HepG2 (cell line): ENCODE measurements at regions of chr6 and their contacts with region 1.

Region 1: DNA sequence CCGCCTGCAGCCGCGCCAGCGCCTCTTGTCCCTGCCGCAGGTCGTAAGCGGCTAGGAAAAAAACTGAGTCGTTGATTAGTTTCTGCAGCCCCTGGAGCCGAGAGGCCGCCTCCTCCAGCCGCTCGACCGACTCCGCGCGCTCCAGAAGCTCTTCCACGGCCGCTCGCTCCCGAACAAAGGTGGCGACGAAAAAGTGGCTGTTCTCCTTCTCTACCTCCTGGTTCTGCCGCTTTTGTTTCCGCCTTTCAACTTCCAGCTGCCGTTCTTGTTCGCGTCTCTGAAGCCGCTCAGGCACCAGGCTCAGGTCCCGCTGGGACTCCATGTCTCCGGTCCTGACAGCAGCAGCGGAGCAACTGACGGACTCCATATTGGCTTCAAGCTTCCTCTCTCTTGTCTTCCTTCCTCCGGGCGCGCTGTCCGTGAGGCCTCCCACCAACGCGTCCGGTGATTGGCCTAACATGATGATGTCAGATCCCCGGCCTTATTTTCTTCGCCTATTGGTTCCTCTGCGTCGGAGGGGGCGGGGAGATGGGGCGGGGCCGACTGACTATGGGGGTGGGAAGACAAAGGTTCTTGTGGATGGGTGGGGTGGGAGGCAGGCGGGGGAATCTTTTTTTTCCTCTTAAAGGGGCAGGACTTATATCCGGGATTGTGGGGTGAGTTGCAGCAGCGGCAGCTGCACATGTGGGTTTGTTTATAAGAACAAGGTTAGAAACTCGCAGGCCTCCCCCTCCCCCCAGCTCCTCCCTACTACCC is at the start of gene TBCC:
- DNase-seq: peak; percentile 99
- ATAC-seq: peak; percentile 87
- H3K4me3 ChIP-seq: peak within 1 kb of the TSS; percentile 93 to 100 (median 99)
- H3K27ac ChIP-seq: peak within 1 kb of the TSS; percentile 93
- H3K4me1 ChIP-seq: peaks cover 44% of the 10 kb centered on the region
- H3K27me3 ChIP-seq: no peaks in the 10 kb centered on the region; a peak in 1 of 5 replicates
- CTCF ChIP-seq: no peak; the same call in 1 of the 2 replicates
- EP300 ChIP-seq: 0 out of 4 replicates have a peak, but pooled peaks of 1 of the 2 experiments have one; percentile 15
- POLR2A ChIP-seq: peak; percentile 97 to 100
- RAD21 ChIP-seq: 0 out of 2 replicates have a peak, but pooled peaks have one; percentile 4
- total RNA-seq, gene TBCC: 36.1 and 43.2 TPM in 2 replicates

Region 2: DNA sequence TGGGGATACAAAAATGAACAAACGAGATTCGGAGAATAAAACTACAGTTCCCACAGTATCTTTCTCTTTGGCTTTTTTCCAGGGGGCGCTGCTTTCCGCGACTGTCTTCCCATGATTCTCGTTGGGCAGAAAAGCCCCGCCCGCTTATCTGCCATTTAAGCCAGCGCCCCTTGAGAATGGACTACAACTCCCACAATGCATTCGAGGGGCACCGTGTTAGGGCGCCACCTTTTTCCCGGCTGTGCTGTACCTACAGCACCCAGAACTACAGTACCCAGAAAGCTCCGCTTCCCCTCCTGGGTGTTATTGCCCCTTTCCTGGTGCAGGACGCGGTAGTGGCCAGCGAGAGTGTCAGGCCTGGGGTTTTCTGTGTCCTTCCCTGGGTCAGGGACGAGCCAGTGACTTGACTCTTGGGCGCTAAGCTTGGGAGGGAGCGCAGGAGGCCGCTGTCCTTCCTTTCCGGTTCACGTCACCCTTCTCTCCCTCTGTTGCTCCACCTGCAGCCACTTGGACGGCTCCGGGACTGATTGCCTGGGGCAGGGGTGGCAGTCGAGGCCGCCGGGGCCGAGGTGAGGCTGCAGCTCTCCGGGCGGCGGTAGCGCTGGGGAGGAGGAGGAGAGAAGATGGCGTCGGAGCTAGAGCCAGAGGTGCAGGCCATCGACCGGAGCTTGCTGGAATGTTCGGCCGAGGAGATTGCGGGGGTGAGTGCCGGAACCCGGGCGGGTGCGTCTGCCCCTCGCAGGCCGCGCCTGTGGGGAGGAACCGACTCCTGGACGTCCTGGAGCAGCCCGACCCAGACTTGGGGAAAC is 182.0 kb before region 1 on chr6 and contains the start of gene UBR2:
- CTCF ChIA-PET with region 1: no interaction called
- POLR2A ChIA-PET with region 1: interaction called, 22 read pairs
- in situ Hi-C with region 1: no loop called
- intact Hi-C with region 1: loop called (anchors 10 kb)
- DNase-seq: peak; percentile 99
- ATAC-seq: peak; percentile 98
- H3K4me3 ChIP-seq: peak within 1 kb of the TSS; percentile 95 to 99 (median 96)
- H3K27ac ChIP-seq: peak within 1 kb of the TSS; percentile 93
- H3K4me1 ChIP-seq: peaks cover 31% of the 10 kb centered on the region
- H3K27me3 ChIP-seq: peaks cover 0 to 5% of the 10 kb centered on the region in 2 experiments; a peak in 1 of 5 replicates
- CTCF ChIP-seq: peak; percentile 82
- EP300 ChIP-seq: peak in 1 of 2 experiments; percentile 62; a peak in 2 of 4 replicates
- POLR2A ChIP-seq: peak; percentile 96 to 98
- RAD21 ChIP-seq: peak; percentile 40; the same call in 1 of the 2 replicates
- total RNA-seq, gene UBR2: 29.3 and 39.3 TPM in 2 replicates

Region 3: GRCh38 chr6:42762426-42762859 is 16.6 kb after region 1 on chr6:
- CTCF ChIA-PET with region 1: no interaction called
- POLR2A ChIA-PET with region 1: interaction called, 14 read pairs
- in situ Hi-C with region 1: no loop called
- intact Hi-C with region 1: no loop called
- DNase-seq: no peak
- ATAC-seq: no peak
- H3K4me3 ChIP-seq: no peak overlapping the region
- H3K27ac ChIP-seq: no peak overlapping the region
- H3K4me1 ChIP-seq: no peaks in the 10 kb centered on the region
- H3K27me3 ChIP-seq: no peaks in the 10 kb centered on the region
- CTCF ChIP-seq: no peak
- EP300 ChIP-seq: no peak
- POLR2A ChIP-seq: no peak
- RAD21 ChIP-seq: no peak

Region 4: DNA sequence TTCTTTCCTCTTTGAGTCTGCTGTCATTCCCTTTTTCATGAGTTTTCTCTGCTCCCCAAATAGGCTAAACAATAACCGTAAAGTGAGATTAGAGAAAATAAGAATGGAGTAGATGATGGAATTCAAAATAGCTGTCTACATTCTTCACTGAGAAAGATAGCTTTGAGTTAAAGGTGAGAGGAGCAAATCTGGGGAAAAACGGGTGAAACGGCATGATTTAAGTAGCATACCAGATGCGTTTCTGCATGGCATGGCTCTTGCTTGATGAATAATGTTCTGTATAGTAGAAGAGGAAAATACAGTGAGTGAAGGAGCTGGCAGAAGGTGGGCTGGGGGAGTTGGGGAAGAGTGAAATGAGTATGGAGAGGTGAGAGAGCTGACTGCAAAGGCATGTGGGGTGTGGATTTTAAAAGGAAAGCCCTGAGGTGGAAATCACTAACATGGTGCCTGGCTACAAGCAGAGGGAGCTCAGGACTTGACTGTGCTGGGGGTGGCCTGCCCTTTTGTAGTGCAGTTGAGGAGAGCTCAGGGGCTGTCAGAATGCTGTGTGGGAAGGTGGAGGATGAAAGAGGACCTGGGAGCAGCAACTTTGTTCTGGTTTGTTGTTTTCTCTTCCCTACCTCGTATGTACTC is 44.8 kb after region 1 on chr6:
- CTCF ChIA-PET with region 1: no interaction called
- POLR2A ChIA-PET with region 1: interaction called, 270 read pairs
- in situ Hi-C with region 1: no loop called
- intact Hi-C with region 1: no loop called
- DNase-seq: no peak
- ATAC-seq: peak; percentile 62
- H3K4me3 ChIP-seq: no peak overlapping the region
- H3K27ac ChIP-seq: no peak overlapping the region
- H3K4me1 ChIP-seq: peaks cover 59% of the 10 kb centered on the region
- H3K27me3 ChIP-seq: no peaks in the 10 kb centered on the region
- CTCF ChIP-seq: no peak
- EP300 ChIP-seq: no peak
- POLR2A ChIP-seq: 0 out of 4 replicates have a peak, but pooled peaks of 1 of the 2 experiments have one; percentile 34
- RAD21 ChIP-seq: no peak

Region 5: DNA sequence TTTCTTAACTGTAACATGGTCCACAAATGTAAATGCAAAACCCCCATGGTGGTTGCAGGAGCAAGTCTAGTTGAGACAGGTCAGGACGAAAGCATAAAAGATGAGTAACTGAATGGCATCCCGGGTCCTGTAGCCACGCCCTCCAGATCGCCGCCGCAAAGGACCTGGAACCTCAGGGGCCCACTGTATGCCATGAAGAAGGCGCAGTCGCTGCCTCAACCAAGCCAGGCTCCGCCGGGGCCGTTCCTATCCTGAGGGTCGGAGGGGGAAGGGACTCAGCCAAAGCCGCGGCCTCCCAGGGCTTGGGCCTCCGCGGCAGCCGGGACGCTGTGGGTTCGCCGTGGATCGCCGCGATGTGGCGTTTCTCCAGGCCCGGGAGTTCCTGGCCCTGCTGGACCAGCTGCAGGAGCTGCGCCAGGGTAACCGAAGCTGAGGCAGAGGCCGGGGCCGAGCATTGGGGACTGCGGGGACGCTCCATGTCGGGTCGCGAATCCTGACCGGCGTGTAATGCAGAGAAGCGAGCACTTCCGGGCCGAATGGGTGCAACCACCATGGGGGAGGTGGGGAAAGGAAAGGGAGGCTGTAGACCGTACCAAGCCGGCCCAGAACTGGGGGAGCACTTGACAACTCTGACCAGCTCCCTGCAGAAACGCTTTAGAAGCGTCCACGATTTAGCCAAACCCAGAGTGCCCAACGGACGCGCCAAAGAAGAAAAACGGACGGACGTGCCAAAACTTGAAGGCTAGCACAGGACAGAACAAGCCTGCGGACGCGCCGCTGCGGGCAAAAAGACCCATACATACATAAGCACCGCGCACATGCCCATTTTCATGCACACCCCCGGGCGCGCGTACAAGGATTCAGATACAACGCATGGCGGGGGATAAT is 144.7 kb after region 1 on chr6:
- CTCF ChIA-PET with region 1: no interaction called
- POLR2A ChIA-PET with region 1: interaction called, 22 read pairs
- in situ Hi-C with region 1: no loop called
- intact Hi-C with region 1: no loop called
- DNase-seq: peak; percentile 95
- ATAC-seq: peak; percentile 91
- H3K4me3 ChIP-seq: peak overlapping the region; percentile 75 to 95 (median 86)
- H3K27ac ChIP-seq: peak overlapping the region; percentile 94
- H3K4me1 ChIP-seq: peaks cover 46% of the 10 kb centered on the region
- H3K27me3 ChIP-seq: no peaks in the 10 kb centered on the region
- CTCF ChIP-seq: 0 out of 2 replicates have a peak, but pooled peaks have one; percentile 36
- EP300 ChIP-seq: no peak
- POLR2A ChIP-seq: peak; percentile 92 to 95
- RAD21 ChIP-seq: peak; percentile 78